PC-9 (cell line): ENCODE measurements at regions of chr6 and their contacts with region 1.

Region 1: GRCh38 chr6:125314019-125314581 is 12.3 kb upstream of the HDDC2 start:
- DNase-seq: peak; percentile 59 to 62
- H3K4me3 ChIP-seq: no peak overlapping the region
- H3K27ac ChIP-seq: no peak overlapping the region
- H3K4me1 ChIP-seq: 0 out of 2 replicates have a peak, but pooled peaks cover 5% of the 10 kb centered on the region
- H3K27me3 ChIP-seq: no peaks in the 10 kb centered on the region
- CTCF ChIP-seq: peak; percentile 96

Region 2: DNA sequence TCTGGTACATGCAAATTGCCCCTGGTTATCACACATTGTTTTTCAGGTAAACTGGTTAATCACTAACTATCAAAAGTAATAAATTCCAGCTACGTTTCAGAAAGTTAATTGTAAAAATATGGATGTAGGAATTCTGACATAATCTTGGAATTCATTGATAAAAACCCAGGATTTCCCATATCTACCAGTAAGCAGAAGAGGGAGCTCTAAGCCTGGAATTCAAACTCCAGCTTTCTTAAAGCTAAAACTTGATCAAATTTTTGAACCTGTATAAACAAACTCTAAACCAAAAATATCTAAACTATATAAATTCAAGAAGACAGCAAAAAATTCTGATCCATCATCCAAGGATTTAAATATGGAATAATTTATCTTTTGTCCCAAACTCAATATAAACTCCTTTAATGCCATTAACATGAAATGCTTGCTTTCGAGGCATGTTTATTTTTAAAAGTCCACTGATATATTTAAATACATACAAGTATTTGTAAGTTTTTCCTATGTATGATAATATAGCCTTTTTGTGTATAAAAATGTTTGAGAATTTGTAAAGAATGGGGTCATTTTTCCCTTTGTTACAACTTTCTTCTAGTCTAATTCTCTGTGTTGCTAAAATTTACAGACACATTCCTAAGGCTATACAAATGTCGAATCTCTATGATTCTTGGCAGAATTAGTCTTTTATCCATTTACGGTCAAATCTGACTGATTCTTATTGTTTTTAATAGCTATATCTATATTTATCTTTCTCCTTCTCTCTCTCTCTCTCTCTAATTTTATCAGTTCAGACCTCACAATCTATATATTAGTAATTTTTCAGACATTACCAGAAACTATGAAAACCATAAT is 443.3 kb before region 1 on chr6:
- CTCF ChIA-PET with region 1: no interaction called
- POLR2A ChIA-PET with region 1: no interaction called
- intact Hi-C with region 1: loop called (anchors 1 kb)
- DNase-seq: no peak
- H3K4me3 ChIP-seq: no peak overlapping the region
- H3K27ac ChIP-seq: no peak overlapping the region
- H3K4me1 ChIP-seq: no peaks in the 10 kb centered on the region
- H3K27me3 ChIP-seq: no peaks in the 10 kb centered on the region
- CTCF ChIP-seq: peak; percentile 92

Region 3: GRCh38 chr6:125191916-125192609 is 122.0 kb before region 1 on chr6:
- CTCF ChIA-PET with region 1: no interaction called
- POLR2A ChIA-PET with region 1: no interaction called
- intact Hi-C with region 1: loop called (anchors 2 kb)
- DNase-seq: peak; percentile 63 to 66
- H3K4me3 ChIP-seq: no peak overlapping the region
- H3K27ac ChIP-seq: peak overlapping the region; percentile 67
- H3K4me1 ChIP-seq: peaks cover 55% of the 10 kb centered on the region
- H3K27me3 ChIP-seq: no peaks in the 10 kb centered on the region
- CTCF ChIP-seq: peak; percentile 85

Region 4: GRCh38 chr6:125377621-125378020 is 63.5 kb after region 1 on chr6:
- CTCF ChIA-PET with region 1: no interaction called
- POLR2A ChIA-PET with region 1: no interaction called
- intact Hi-C with region 1: no loop called
- DNase-seq: no peak
- H3K4me3 ChIP-seq: no peak overlapping the region
- H3K27ac ChIP-seq: no peak overlapping the region
- H3K4me1 ChIP-seq: no peaks in the 10 kb centered on the region
- H3K27me3 ChIP-seq: no peaks in the 10 kb centered on the region
- CTCF ChIP-seq: no peak

Region 5: GRCh38 chr6:125747595-125748405 is 433.7 kb after region 1 on chr6:
- CTCF ChIA-PET with region 1: interaction called, 3 read pairs
- POLR2A ChIA-PET with region 1: no interaction called
- intact Hi-C with region 1: loop called (anchors 1 kb)
- DNase-seq: peak in 1 of 2 experiments; percentile 52
- H3K4me3 ChIP-seq: peak overlapping the region; percentile 92
- H3K27ac ChIP-seq: no peak overlapping the region
- H3K4me1 ChIP-seq: peaks cover 20% of the 10 kb centered on the region
- H3K27me3 ChIP-seq: peaks cover 38% of the 10 kb centered on the region
- CTCF ChIP-seq: no peak

Region 6: GRCh38 chr6:125753218-125753936 is 439.3 kb after region 1 on chr6:
- CTCF ChIA-PET with region 1: interaction called, 3 read pairs
- POLR2A ChIA-PET with region 1: no interaction called
- intact Hi-C with region 1: loop called (anchors 1 kb)
- DNase-seq: no peak
- H3K4me3 ChIP-seq: no peak overlapping the region
- H3K27ac ChIP-seq: no peak overlapping the region
- H3K4me1 ChIP-seq: peaks cover 7% of the 10 kb centered on the region
- H3K27me3 ChIP-seq: peaks cover 4% of the 10 kb centered on the region; the same call in 1 of the 2 replicates
- CTCF ChIP-seq: peak; percentile 79

Region 7: DNA sequence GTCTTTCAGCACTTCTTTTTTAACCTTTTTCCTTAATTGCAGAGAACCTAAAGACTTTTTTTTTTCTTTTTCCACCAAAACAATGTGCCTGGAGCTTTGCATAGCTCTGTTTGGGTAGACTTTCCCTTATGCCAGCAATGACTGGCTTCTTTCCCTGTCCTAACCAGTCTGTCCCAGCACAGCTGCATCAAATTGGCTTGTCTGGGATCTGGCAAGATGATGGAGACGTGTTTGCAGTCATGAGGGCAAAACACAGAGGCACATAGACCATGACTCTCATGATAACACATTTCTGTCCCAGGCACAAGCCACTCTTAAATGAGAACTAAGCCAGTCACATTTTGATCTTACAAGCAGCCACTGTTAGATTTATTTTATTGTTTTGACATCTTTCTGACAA is 451.8 kb after region 1 on chr6:
- CTCF ChIA-PET with region 1: interaction called, 4 read pairs
- POLR2A ChIA-PET with region 1: no interaction called
- intact Hi-C with region 1: loop called (anchors 1 kb)
- DNase-seq: no peak
- H3K4me3 ChIP-seq: no peak overlapping the region
- H3K27ac ChIP-seq: no peak overlapping the region
- H3K4me1 ChIP-seq: no peaks in the 10 kb centered on the region
- H3K27me3 ChIP-seq: no peaks in the 10 kb centered on the region
- CTCF ChIP-seq: no peak

Region 8: GRCh38 chr6:125974214-125974866 is 660.2 kb after region 1 on chr6:
- CTCF ChIA-PET with region 1: interaction called, 3 read pairs
- POLR2A ChIA-PET with region 1: no interaction called
- intact Hi-C with region 1: loop called (anchors 1 kb)
- DNase-seq: peak in 1 of 2 experiments; percentile 71
- H3K4me3 ChIP-seq: no peak overlapping the region
- H3K27ac ChIP-seq: peak overlapping the region; percentile 78
- H3K4me1 ChIP-seq: 0 out of 2 replicates have a peak, but pooled peaks cover 6% of the 10 kb centered on the region
- H3K27me3 ChIP-seq: no peaks in the 10 kb centered on the region
- CTCF ChIP-seq: peak; percentile 87